ENCODE measurements at regions of chr7 and their contacts with region 1.

Region 1: GRCh38 chr7:94050046-94050445 is 45.9 kb upstream of the BET1 start:
- DNase-seq: peak; percentile 89
- ATAC-seq: peak; percentile 82
- H3K4me3 ChIP-seq: peak overlapping the region in 4 of 5 experiments; percentile 7 to 60 (median 33)
- H3K4me3 Mint-ChIP-seq: peak overlapping the region; percentile 81
- H3K27ac ChIP-seq: peak overlapping the region; percentile 84 to 89
- H3K27ac Mint-ChIP-seq: peak overlapping the region; percentile 91
- H3K4me1 ChIP-seq: peaks cover 67 to 70% of the 10 kb centered on the region in 2 donors
- H3K4me1 Mint-ChIP-seq: peaks cover 67% of the 10 kb centered on the region
- H3K27me3 ChIP-seq: no peaks in the 10 kb centered on the region
- H3K27me3 Mint-ChIP-seq: no peaks in the 10 kb centered on the region
- CTCF ChIP-seq: no peak

Region 2: DNA sequence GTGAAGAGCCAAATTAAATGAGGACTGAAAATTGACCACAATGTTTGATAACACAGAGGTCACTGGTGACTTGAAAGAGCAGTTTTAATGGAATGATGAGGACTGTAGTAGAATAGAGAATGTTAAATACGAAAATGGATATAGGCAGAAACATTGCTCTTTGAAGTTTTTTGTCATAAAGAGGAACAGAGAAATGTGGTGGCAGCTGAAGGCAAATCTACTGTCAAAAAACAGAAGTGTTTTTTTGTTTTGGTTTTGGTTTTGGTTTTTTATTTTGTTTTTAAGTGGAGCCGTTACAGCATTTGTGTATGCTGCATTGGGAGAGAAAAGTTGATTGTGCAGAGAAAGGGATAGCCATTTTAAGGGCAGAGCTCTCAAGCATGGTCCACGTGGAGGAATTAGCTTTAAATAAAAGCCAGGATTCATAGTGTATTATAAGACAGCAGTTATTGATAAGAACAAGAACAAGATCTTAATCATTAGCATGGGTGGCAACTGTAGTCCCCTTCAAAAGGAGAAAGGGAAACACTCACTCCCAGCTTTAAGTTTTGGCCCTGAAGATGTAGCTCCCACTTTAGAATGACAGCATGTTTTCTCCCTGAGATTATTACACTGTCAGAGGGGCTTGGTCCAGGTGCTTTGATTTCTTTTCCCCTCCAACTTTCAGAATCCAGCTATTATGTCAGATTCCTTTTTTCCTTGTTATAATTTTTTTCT is 110.8 kb after region 1 on chr7:
- CTCF ChIA-PET with region 1: no interaction called
- POLR2A ChIA-PET with region 1: no interaction called
- intact Hi-C with region 1: loop called (anchors 1 kb)
- DNase-seq: peak; percentile 79
- ATAC-seq: peak; percentile 82
- H3K4me3 ChIP-seq: peak overlapping the region; percentile 1 to 52 (median 33)
- H3K4me3 Mint-ChIP-seq: peak overlapping the region; percentile 84
- H3K27ac ChIP-seq: peak overlapping the region; percentile 73 to 90
- H3K27ac Mint-ChIP-seq: peak overlapping the region; percentile 93
- H3K4me1 ChIP-seq: peaks cover 25 to 29% of the 10 kb centered on the region in 2 donors
- H3K4me1 Mint-ChIP-seq: peaks cover 49% of the 10 kb centered on the region
- H3K27me3 ChIP-seq: no peaks in the 10 kb centered on the region
- H3K27me3 Mint-ChIP-seq: no peaks in the 10 kb centered on the region
- CTCF ChIP-seq: no peak

Region 3: DNA sequence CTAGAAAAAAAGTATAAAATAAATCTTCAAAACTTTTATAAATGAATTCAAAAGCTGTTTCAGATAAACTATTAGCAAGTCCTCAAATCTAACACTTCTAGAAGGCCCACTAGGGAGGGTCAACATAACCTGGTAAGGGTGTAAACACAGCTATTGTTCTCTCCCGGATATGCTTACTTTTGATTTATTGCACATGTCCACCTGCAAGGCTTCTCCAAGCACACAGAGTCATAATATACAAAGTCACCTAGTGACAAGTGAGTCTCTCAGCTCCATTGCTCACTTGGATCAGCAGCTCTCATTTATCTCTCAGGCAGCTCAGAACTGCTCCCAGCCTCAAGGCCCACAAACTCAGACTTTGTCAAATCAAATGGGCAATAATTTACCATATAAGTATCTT is 300.7 kb after region 1 on chr7:
- CTCF ChIA-PET with region 1: no interaction called
- POLR2A ChIA-PET with region 1: no interaction called
- intact Hi-C with region 1: loop called (anchors 5 kb)
- DNase-seq: no peak
- ATAC-seq: no peak
- H3K4me3 ChIP-seq: no peak overlapping the region
- H3K4me3 Mint-ChIP-seq: no peak overlapping the region
- H3K27ac ChIP-seq: no peak overlapping the region
- H3K27ac Mint-ChIP-seq: no peak overlapping the region
- H3K4me1 ChIP-seq: peaks cover 16 to 19% of the 10 kb centered on the region in 2 donors
- H3K4me1 Mint-ChIP-seq: peaks cover 28% of the 10 kb centered on the region
- H3K27me3 ChIP-seq: no peaks in the 10 kb centered on the region
- H3K27me3 Mint-ChIP-seq: peaks cover 11% of the 10 kb centered on the region
- CTCF ChIP-seq: no peak